ENCODE measurements at regions of chr17 and their contacts with region 1.

Region 1: DNA sequence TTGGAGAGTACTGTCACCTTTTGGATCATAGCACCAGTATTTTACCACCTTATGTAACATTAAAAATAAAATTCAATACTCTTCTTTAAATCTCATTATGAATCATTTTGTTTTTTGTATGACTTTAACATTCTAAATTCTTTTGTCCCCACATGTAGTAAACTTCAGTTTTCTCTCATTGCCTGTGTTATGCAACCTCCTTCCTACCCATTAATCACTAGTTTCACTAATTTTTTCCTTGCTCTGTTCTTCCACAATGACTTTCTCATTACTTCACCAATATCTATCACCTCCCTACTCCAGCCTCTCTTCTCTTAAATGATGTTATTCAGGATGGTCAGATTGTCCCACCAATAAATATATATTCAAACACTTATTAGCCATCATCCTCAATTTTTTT is 68.7 kb downstream of the TTC19 start:
- DNase-seq: no peak
- H3K4me3 ChIP-seq: no peak overlapping the region
- H3K27ac ChIP-seq: no peak overlapping the region
- H3K4me1 ChIP-seq: no peaks in the 10 kb centered on the region
- H3K27me3 ChIP-seq: no peaks in the 10 kb centered on the region
- CTCF ChIP-seq: no peak

Region 2: DNA sequence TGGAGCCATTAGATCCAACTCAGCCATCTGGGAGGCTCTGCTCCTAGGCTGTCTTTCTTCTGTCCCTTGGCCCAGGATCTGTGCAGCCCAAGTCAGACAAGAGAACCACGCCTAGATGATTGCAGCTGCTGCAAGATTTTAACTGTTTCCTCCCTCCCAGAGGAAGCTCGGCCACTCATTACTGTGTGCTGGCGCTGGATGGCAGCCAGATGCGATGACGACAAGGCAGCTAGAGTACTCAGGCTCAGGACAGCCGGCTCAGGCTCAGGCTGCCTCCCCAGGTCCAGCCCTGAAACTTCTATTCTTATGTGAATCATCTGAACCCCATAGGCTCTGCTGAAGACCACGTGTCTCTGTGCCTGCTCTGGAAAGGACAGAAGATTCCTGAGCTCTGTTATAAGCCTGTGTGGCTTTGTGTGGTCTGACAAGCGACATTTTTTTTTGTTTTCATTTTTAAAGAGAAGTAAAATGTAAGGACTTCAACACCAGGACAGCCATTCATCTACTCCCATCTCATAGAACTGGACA is 416.7 kb before region 1 on chr17:
- CTCF ChIA-PET with region 1: no interaction called
- dilution Hi-C with region 1: no loop called
- in situ Hi-C with region 1: no loop called
- intact Hi-C with region 1: no loop called
- DNase-seq: peak; percentile 99
- H3K4me3 ChIP-seq: peak overlapping the region; percentile 55 to 67 (median 61)
- H3K27ac ChIP-seq: peak overlapping the region; percentile 77
- H3K4me1 ChIP-seq: peaks cover 41% of the 10 kb centered on the region
- H3K27me3 ChIP-seq: no peaks in the 10 kb centered on the region
- CTCF ChIP-seq: no peak

Region 3: DNA sequence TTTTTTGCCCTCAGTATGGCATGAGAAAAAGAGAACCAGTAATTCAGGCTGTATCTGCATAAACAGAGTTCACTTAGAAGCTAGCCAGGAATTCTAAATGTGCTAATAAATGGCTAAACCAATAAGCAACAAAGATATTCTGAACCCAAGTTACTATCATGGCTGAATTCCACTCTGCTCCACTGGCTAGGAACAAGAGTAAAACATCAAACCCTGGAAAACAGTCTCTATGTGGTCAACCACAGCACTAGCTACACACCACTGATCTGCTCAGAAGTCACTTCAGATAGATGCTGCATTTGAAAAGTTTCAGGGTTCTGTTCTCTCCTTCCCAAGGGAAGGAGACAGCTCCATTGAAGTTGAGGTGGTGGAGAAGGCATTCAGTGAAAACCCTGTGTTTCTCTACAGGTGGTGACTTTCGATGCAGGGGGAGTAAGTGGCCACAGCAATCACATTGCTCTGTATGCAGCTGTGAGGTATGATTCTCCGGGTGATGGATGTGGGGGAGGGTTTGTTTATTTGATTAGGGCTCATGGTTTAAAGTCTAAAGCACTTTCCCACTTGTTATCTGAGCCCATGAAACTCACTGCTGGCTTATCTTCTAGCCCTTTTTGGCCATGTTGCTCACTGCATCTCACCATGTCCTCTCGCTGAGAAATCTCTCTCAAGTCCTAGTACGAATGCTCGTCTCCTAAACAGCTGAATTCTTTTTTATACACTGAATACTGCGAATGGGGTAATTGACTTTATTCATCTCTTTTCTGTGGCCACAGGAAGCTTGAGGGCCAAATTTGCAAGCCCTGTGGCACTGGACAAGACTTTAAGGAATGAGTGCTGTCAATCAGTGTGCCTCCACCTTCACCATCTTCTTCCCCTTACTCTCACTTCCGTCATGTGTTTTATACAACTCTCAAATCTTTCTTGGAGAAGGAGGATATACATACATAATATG is 245.1 kb after region 1 on chr17:
- CTCF ChIA-PET with region 1: no interaction called
- dilution Hi-C with region 1: loop called (anchors 10 kb)
- in situ Hi-C with region 1: no loop called
- intact Hi-C with region 1: no loop called
- DNase-seq: no peak
- H3K4me3 ChIP-seq: no peak overlapping the region
- H3K27ac ChIP-seq: no peak overlapping the region
- H3K4me1 ChIP-seq: no peaks in the 10 kb centered on the region
- H3K27me3 ChIP-seq: no peaks in the 10 kb centered on the region
- CTCF ChIP-seq: no peak